SK-N-SH (cell line): ENCODE measurements at regions of chr11 and their contacts with region 1.

Region 1: DNA sequence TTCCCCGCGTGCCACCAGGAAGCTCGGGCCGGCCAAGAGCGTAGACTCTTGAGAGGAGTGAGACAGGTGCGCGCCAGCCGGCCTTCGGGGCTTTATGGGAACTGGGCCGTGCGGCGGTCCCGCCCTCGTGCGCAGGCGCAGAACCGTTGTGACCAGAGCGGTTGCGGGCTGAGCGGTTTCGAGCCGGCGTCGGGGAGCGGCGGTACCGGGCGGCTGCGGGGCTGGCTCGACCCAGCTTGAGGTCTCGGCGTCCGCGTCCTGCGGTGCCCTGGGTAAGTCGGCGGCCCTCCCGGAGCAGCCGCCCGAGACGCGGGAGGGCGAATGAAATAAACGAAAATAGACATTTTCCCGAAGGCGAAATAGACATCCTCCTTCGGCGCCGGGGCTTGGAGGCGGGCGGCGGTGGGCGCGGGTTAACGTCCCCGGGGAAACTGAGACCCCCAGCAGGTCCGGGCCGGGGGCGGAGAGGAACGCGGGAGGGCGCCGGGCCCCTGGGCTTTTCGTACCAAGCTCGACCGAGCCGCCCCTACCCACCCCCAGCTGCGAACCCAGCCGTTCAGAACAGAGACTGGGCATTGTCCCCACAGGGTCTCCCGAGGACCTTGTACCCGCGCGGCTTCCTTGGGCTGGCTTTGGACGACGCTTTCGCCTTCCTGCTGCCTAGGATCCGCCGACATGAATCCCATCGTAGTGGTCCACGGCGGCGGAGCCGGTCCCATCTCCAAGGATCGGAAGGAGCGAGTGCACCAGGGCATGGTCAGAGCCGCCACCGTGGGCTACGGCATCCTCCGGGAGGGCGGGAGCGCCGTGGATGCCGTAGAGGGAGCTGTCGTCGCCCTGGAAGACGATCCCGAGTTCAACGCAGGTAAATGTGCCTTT is at the start of gene ASRGL1:
- DNase-seq: peak; percentile 91
- H3K4me3 ChIP-seq: peak within 1 kb of the TSS; percentile 63 to 83
- H3K27ac ChIP-seq: peak within 1 kb of the TSS in 1 of 2 experiments; percentile 30; a peak in 1 of 4 replicates
- H3K4me1 ChIP-seq: no peaks in the 10 kb centered on the region; a peak in 2 of 4 replicates
- H3K27me3 ChIP-seq: peaks cover 31% of the 10 kb centered on the region; the same call in 1 of the 2 replicates
- CTCF ChIP-seq: no peak
- EP300 ChIP-seq: no peak
- RAD21 ChIP-seq: no peak
- polyA plus RNA-seq, gene ASRGL1: 2.6 and 4.3 TPM in 2 replicates

Region 2: DNA sequence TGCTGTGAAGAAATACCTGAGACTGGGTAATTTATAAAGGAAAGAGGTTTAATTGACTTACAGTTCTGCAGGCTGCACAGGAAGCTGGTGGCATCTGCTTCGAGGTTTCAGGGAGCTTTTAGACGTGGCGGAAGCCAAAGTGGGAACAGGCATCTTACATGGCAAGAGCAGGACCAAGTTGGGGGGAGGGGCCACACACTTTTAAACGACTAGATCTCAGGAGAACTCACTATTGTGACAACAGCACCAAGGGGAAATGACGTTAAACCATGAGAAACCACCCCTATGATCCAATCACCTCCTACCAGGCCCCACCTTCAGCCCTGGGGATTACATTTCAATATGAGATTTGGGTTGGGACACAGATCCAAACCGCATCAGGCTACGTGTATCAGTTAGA is 27.6 kb before region 1 on chr11:
- CTCF ChIA-PET with region 1: interaction called, 14 read pairs
- POLR2A ChIA-PET with region 1: no interaction called
- DNase-seq: no peak
- H3K4me3 ChIP-seq: peak overlapping the region in 1 of 2 experiments; percentile 26; a peak in 1 of 4 replicates
- H3K27ac ChIP-seq: no peak overlapping the region
- H3K4me1 ChIP-seq: no peaks in the 10 kb centered on the region
- H3K27me3 ChIP-seq: peaks cover 32% of the 10 kb centered on the region
- CTCF ChIP-seq: no peak
- EP300 ChIP-seq: no peak
- RAD21 ChIP-seq: no peak

Region 3: DNA sequence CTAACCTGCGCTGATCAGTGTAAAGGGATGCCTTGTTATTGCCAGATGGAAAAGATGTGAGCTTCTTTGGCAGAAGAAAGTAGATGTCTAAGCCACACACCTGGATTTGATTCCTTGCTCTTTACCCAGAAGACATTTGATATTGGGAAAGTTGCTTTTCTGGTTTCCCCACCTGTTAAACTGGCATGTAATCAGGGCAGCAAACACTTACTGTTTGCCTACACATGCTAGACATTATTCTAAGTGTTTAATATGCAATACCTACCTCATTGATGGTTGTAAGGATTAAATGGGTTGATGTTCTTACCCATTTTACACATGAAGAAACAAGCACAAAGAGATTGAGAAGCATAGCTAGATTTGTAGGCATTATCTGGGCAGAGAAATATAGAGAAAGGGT is 16.3 kb after region 1 on chr11:
- CTCF ChIA-PET with region 1: interaction called, 11 read pairs
- POLR2A ChIA-PET with region 1: no interaction called
- DNase-seq: no peak
- H3K4me3 ChIP-seq: no peak overlapping the region
- H3K27ac ChIP-seq: no peak overlapping the region
- H3K4me1 ChIP-seq: no peaks in the 10 kb centered on the region
- H3K27me3 ChIP-seq: no peaks in the 10 kb centered on the region
- CTCF ChIP-seq: no peak
- EP300 ChIP-seq: no peak
- RAD21 ChIP-seq: no peak

Region 4: DNA sequence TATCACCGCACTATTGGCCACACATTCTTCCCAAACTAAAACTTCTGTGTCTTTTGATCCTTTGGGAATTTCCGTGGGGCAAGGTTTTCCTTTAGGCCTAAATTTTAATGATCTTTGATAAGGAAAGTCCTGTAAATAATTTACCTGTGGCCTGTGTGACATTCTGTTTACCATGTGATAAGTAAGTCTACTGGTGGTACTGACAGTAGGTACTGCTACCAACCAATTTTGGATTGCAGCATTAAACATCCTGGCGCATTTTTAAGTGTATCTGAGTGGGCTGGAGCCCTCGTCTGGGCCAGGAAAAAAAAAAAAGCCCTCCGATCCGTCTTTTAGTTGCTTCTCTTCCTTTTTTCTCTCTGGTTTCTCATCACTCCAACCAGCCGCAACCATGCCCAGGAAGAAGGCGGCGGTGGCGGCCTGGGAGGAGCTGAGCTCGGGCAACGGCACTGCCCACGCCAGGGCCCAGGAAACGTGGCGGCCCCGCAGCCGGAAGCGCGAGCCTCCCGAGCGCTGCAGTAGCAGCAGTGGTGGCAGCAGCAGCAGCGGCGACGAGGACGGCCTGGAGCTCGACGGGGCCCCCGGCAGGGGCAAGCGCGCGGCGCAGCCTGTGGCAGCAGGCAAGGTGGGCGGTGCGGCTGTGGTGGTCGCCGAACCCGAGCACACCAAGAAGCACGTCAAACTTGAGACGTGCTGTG is 33.4 kb after region 1 on chr11:
- CTCF ChIA-PET with region 1: interaction called, 34 read pairs
- POLR2A ChIA-PET with region 1: interaction called, 5 read pairs
- DNase-seq: no peak
- H3K4me3 ChIP-seq: no peak overlapping the region
- H3K27ac ChIP-seq: no peak overlapping the region
- H3K4me1 ChIP-seq: no peaks in the 10 kb centered on the region
- H3K27me3 ChIP-seq: no peaks in the 10 kb centered on the region
- CTCF ChIP-seq: no peak
- EP300 ChIP-seq: no peak
- RAD21 ChIP-seq: no peak

Region 5: DNA sequence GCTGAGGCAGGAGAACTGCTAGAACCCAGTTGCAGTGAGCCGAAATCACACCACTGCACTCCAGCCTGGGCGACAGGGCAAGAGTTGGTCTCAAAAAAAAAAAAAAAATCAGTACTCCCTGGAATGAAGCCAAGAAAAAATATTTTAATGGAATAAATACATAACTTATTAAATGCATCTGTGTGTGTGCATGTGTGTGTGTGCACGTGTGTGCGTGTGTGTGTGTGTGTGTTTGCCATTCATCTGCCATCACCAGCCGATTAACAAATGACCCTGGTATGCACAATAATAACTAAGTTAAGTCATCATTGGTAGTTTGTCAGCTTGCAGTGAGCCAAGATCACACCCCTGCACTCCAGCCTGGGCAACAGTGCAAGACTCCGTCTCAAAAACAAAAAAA is 46.3 kb after region 1 on chr11:
- CTCF ChIA-PET with region 1: interaction called, 10 read pairs
- POLR2A ChIA-PET with region 1: no interaction called
- DNase-seq: no peak
- H3K4me3 ChIP-seq: no peak overlapping the region
- H3K27ac ChIP-seq: no peak overlapping the region
- H3K4me1 ChIP-seq: peaks cover 0 to 11% of the 10 kb centered on the region in 2 experiments; a peak in 2 of 4 replicates
- H3K27me3 ChIP-seq: no peaks in the 10 kb centered on the region; the same call in 1 of the 2 replicates
- CTCF ChIP-seq: no peak
- EP300 ChIP-seq: no peak
- RAD21 ChIP-seq: no peak

Region 6: DNA sequence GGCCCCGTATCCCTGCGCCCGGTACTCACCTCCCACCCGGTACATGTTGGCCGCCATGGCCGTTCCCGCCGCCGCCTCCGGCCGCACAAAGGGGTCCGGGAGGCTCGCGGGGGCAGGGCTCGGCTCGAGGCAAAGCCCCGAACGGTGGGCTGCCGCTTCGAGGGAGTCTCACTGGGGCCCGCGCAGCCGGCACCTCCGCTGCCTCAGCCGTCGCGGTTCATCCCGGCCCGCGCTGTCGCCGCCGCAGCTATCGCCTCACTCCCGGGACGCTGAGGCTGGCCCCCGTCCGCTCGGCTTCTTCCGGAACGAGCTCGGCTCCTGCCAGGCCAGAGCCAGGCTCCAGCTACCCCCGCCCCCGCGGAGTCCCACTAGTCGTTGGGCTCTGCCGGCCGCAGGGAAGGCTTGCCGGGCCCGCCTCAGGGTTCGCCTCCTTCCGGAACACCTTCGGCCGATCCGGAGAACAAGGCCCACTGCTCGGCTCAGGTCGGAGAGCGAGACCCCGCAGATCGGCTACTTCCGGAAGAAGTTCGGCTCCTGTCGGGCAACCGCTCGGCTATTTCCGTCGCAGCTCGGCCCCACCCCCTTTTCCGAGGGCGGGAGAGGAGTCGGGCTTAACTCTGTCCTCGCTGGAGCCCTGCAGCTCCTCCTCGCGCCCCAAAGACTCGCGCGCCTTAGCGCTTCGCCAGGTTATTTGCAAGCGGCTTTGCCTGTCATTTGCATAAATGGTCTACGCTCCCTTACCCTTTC is 264.0 kb after region 1 on chr11 and contains the start of gene MTA2:
- CTCF ChIA-PET with region 1: no interaction called
- POLR2A ChIA-PET with region 1: no interaction called
- DNase-seq: peak; percentile 97
- H3K4me3 ChIP-seq: peak within 1 kb of the TSS; percentile 70 to 96
- H3K27ac ChIP-seq: peak within 1 kb of the TSS; percentile 87 to 93
- H3K4me1 ChIP-seq: peaks cover 12 to 23% of the 10 kb centered on the region in 2 experiments; a peak in 3 of 4 replicates
- H3K27me3 ChIP-seq: no peaks in the 10 kb centered on the region
- CTCF ChIP-seq: no peak
- EP300 ChIP-seq: no peak
- RAD21 ChIP-seq: no peak
- polyA plus RNA-seq, gene MTA2: 18.4 and 20.6 TPM in 2 replicates